ENCODE measurements at regions of chr17 and their contacts with region 1.

Region 1: GRCh38 chr17:76353599-76354316 is at the start of gene PRPSAP1:
- DNase-seq: peak; percentile 88 to 89
- H3K4me3 ChIP-seq: peak within 1 kb of the TSS; percentile 72 to 91 (median 84)
- H3K27ac ChIP-seq: peak within 1 kb of the TSS; percentile 90 to 98 (median 93)
- H3K4me1 ChIP-seq: peaks cover 0 to 14% of the 10 kb centered on the region in 2 donors
- H3K27me3 ChIP-seq: no peaks in the 10 kb centered on the region
- CTCF ChIP-seq: peak in 5 of 6 experiments; percentile 18 to 49 (median 39)
- POLR2A ChIP-seq: peak; percentile 92 to 97
- total RNA-seq, gene PRPSAP1: 133 to 198 (median 167) TPM

Region 2: DNA sequence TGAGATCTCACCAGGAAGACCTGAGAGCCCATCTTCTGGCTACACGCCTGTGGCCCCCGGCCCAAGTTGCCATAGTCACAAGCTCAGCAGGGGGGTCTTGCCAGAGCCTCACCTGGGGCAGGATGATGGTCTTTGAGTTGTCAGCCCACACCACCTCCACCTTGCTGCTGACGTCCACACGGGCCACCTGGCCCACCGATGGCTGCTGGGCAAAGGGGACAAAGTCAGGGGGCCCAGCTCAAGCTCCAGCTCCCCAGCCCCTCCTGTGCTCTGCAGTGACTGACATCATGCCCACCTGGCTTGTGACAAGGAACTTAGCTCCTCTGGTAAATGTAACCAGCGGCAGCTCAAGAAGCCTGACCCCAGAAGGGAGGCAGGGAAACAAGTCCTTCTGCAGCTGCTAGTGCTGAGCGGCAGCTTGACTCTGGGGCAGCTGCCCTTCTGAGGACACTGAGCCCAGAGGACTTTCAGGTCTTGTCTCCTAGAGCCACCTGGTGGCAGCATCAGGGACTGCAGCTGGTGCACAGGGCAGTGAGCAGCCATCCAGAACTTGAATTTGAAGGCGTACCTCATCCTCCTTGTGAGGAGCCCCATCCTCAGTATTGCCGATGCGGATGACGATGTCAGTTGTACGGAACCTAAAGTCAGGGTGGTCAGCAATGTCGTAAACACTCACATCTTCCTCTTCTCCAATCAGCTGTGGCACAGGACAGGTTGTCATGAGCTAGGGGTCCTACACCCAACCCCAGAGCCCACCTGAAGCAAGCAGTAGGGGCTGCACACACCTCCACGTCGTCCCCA is 44.1 kb after region 1 on chr17:
- intact Hi-C with region 1: loop called (anchors 2 kb)
- DNase-seq: peak; percentile 91 to 95
- H3K4me3 ChIP-seq: no peak overlapping the region
- H3K27ac ChIP-seq: peak overlapping the region in 1 of 3 donors; percentile 22
- H3K4me1 ChIP-seq: peaks cover 13 to 33% of the 10 kb centered on the region in 2 donors
- H3K27me3 ChIP-seq: no peaks in the 10 kb centered on the region
- CTCF ChIP-seq: peak; percentile 96 to 98 (median 98)
- POLR2A ChIP-seq: no peak

Region 3: GRCh38 chr17:76473541-76473985 is 119.8 kb after region 1 on chr17:
- intact Hi-C with region 1: no loop called
- DNase-seq: no peak
- H3K4me3 ChIP-seq: no peak overlapping the region
- H3K27ac ChIP-seq: no peak overlapping the region
- H3K4me1 ChIP-seq: no peaks in the 10 kb centered on the region
- H3K27me3 ChIP-seq: no peaks in the 10 kb centered on the region
- CTCF ChIP-seq: no peak
- POLR2A ChIP-seq: no peak

Region 4: DNA sequence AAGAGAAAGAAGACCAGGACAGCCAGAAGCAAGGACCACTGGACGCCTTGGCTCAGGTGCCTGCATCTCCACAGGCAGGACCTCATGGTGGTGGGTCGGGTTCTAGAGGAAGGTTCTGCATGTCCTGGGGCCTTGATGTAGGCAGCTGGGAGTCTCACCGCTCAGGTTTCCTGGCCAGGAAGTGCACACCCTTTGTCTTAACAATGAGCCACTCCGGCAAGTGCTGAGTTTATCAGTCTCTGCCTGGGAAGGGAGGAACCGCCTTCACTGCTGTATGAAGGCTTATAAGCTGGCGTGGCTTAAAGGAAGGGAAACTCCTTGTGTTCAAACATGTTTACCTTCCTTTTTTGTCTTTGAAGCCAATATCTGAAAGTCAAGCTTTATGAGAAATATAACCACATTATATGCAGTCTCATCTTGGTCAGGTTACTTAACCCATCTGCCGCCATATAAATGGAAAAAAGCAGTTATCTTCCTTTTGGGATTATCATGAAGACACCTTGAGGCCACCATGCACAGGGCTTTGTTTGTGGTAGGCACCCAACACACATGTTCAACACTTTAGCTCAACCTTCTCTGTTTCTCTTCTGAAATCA is 289.9 kb after region 1 on chr17 and contains the start of gene ST6GALNAC1:
- intact Hi-C with region 1: no loop called
- DNase-seq: no peak
- H3K4me3 ChIP-seq: no peak within 1 kb of the TSS
- H3K27ac ChIP-seq: no peak within 1 kb of the TSS
- H3K4me1 ChIP-seq: peaks cover 9 to 15% of the 10 kb centered on the region in 2 donors
- H3K27me3 ChIP-seq: no peaks in the 10 kb centered on the region
- CTCF ChIP-seq: no peak
- POLR2A ChIP-seq: no peak
- total RNA-seq, gene ST6GALNAC1: 0.29 to 7.0 (median 1.1) TPM